Activated CD4-positive, alpha-beta memory T cell treated with anti-CD3 and anti-CD28 coated beads for 36 hours (primary cell): ENCODE measurements at regions of chr2 and their contacts with region 1.

Region 1: DNA sequence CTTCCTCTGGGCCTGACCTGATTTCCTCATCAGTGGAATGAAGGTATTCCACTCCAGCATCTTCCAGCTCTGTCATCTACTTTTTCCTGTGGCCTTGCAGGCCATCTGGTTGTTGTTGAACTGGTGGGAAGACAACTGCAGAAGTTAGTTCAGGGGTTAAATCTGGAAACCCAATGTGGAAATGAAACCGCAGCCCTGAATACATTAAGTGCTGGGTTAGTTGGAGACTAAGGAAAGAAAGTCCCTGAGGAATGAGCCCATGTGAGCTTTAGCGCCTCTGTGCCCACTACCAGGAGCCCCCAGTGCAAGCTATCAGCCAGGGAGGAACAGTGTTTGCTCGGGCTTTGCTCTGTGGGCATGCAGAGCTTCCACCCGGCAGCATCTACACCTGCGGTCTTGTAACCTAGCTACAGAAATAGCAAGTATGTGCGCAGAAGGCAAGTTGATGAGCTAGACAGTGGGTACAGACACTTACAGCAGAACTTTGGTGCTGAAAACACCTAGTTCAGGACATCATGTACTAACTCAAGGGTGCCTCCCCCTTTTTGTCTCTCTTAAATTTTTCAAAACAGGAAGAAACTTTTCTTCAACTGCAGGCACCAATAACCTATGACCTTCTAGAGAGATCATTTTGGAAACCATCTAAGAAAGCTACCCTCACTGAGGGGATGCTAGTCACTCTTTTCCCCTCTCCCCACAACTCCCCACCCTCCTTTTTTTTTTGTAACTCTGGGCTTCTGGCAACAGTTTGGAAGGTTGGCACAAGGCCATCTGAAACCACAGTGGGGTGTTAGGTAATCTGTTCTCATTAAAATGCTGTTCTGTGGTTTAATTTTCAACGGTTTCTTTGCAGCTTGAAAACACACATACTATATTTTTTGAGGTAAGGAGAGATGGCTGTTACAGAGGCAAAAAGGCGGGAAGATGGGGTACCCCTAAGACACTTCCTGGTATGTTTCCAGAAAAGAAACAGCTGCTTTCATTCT is 18.3 kb upstream of the CXCR4 start:
- DNase-seq: peak; percentile 75
- H3K4me3 Mint-ChIP-seq: peak overlapping the region; percentile 11
- H3K27ac Mint-ChIP-seq: peak overlapping the region; percentile 70
- H3K4me1 Mint-ChIP-seq: peaks cover 89% of the 10 kb centered on the region
- H3K27me3 Mint-ChIP-seq: peaks cover 14% of the 10 kb centered on the region

Region 2: GRCh38 chr2:135820003-135820618 is 316.1 kb before region 1 on chr2:
- CTCF ChIA-PET with region 1: no interaction called
- POLR2A ChIA-PET with region 1: no interaction called
- intact Hi-C with region 1: loop called (anchors 2 kb)
- DNase-seq: peak; percentile 94
- H3K4me3 Mint-ChIP-seq: peak overlapping the region; percentile 61
- H3K27ac Mint-ChIP-seq: peak overlapping the region; percentile 78
- H3K4me1 Mint-ChIP-seq: peaks cover 38% of the 10 kb centered on the region
- H3K27me3 Mint-ChIP-seq: no peaks in the 10 kb centered on the region

Region 3: GRCh38 chr2:135960656-135961551 is 175.3 kb before region 1 on chr2:
- CTCF ChIA-PET with region 1: interaction called, 3 read pairs
- POLR2A ChIA-PET with region 1: no interaction called
- intact Hi-C with region 1: loop called (anchors 5 kb)
- DNase-seq: peak; percentile 37
- H3K4me3 Mint-ChIP-seq: peak overlapping the region; percentile 1
- H3K27ac Mint-ChIP-seq: peak overlapping the region; percentile 75
- H3K4me1 Mint-ChIP-seq: peaks cover 59% of the 10 kb centered on the region
- H3K27me3 Mint-ChIP-seq: no peaks in the 10 kb centered on the region

Region 4: GRCh38 chr2:136059036-136059472 is 77.2 kb before region 1 on chr2:
- CTCF ChIA-PET with region 1: interaction called, 4 read pairs
- POLR2A ChIA-PET with region 1: interaction called, 13 read pairs
- intact Hi-C with region 1: loop called (anchors 1 kb)
- DNase-seq: no peak
- H3K4me3 Mint-ChIP-seq: no peak overlapping the region
- H3K27ac Mint-ChIP-seq: no peak overlapping the region
- H3K4me1 Mint-ChIP-seq: peaks cover 63% of the 10 kb centered on the region
- H3K27me3 Mint-ChIP-seq: no peaks in the 10 kb centered on the region

Region 5: GRCh38 chr2:136238286-136239078 is 102.3 kb after region 1 on chr2:
- CTCF ChIA-PET with region 1: interaction called, 16 read pairs
- POLR2A ChIA-PET with region 1: interaction called, 8 read pairs
- intact Hi-C with region 1: loop called (anchors 1 kb)
- DNase-seq: peak; percentile 61
- H3K4me3 Mint-ChIP-seq: no peak overlapping the region
- H3K27ac Mint-ChIP-seq: peak overlapping the region; percentile 93
- H3K4me1 Mint-ChIP-seq: peaks cover 64% of the 10 kb centered on the region
- H3K27me3 Mint-ChIP-seq: no peaks in the 10 kb centered on the region

Region 6: DNA sequence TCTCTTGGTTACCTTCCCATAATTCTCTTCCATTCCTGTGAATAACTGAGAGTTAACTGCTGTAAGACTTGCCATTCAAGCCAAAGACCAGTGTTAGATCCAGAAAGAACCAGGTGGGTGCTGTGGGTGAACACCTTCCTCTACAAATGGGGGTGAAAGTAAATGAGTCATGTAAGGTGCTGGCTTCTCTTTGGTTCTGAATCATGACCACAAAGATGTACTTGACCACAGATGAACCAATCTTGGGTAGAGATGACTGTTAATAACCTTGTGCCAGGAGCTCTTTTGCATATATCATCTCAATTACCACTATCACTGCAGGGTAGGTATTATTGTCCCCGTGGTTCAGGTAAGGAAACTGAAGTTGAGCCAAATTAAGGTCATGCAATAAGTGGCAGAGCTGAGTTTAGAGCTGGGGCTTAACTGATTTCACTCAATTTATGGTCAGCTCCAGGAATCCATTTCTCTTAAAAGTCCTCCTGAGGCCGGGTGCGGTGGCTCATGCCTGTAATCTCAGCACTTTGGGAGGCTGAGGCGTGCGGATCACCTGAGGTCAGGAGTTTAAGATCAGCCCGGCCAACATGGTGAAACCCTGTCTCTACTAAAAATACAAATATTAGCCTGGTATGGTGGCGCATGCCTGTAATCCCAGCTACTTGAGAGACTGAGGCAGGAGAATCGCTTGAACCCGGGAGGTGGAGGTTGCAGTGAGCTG is 226.6 kb after region 1 on chr2:
- CTCF ChIA-PET with region 1: no interaction called
- POLR2A ChIA-PET with region 1: interaction called, 5 read pairs
- intact Hi-C with region 1: loop called (anchors 1 kb)
- DNase-seq: peak; percentile 67
- H3K4me3 Mint-ChIP-seq: peak overlapping the region; percentile 25
- H3K27ac Mint-ChIP-seq: peak overlapping the region; percentile 53
- H3K4me1 Mint-ChIP-seq: peaks cover 56% of the 10 kb centered on the region
- H3K27me3 Mint-ChIP-seq: peaks cover 5% of the 10 kb centered on the region